HEK293 (cell line): ENCODE measurements at regions of chr4 and their contacts with region 1.

Region 1: GRCh38 chr4:168509786-168510185 is 12.9 kb downstream of the PALLD start:
- H3K4me3 ChIP-seq: no peak overlapping the region
- H3K27ac ChIP-seq: no peak overlapping the region
- H3K4me1 ChIP-seq: no peaks in the 10 kb centered on the region
- CTCF ChIP-seq: no peak

Region 2: DNA sequence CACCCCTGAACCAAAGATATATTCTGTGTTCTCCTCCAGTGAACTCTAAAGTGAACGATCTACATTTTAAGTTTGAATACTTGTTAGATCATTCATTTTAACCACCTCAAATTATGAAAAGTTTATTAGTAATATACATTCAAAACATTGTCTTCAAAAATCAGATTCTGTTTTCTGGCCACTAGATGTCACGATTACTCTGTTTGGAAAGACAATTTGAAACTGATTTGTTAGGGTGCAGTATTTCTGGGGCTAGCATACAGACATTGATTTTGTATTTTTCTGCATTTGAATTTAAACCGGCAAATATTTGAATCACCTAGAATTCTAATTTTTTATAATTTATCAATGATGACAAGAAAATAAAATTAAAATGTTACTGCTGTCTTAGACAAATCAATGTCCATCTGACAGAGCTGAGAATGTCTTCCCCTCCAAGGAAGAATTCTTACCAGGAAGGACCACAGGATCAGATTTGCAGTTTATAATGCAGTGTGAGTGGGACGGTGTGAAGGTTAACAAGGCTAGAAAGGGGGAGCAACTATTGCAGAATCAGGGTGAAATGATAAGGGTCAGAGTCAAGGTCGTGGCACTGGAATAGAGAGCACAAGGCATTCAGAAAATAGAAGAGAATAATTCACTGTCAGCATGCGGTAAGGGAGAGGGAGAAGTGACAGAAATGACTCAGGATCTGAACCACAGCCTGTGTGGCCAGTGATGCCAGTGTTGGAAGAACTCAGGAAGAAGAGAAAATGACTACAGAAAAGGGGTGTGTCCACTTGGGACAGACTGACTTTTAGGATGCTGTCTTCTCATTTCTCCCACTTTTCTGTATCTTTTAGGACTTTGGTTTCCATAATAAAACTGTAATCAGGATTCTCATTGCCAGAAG is 325.8 kb before region 1 on chr4:
- CTCF ChIA-PET with region 1: interaction called, 12 read pairs
- POLR2A ChIA-PET with region 1: no interaction called
- H3K4me3 ChIP-seq: no peak overlapping the region
- H3K27ac ChIP-seq: no peak overlapping the region
- H3K4me1 ChIP-seq: no peaks in the 10 kb centered on the region
- CTCF ChIP-seq: no peak